WTC11 (cell line): ENCODE measurements at regions of chr7 and their contacts with region 1.

Region 1: GRCh38 chr7:2709553-2710285 is 21.7 kb downstream of the AMZ1 start:
- DNase-seq: peak; percentile 91
- ATAC-seq: peak; percentile 94
- H3K4me3 Mint-ChIP-seq: no peak overlapping the region
- H3K27ac Mint-ChIP-seq: no peak overlapping the region
- H3K4me1 Mint-ChIP-seq: peaks cover 8% of the 10 kb centered on the region
- H3K27me3 Mint-ChIP-seq: no peaks in the 10 kb centered on the region
- CTCF ChIP-seq: peak; percentile 93

Region 2: DNA sequence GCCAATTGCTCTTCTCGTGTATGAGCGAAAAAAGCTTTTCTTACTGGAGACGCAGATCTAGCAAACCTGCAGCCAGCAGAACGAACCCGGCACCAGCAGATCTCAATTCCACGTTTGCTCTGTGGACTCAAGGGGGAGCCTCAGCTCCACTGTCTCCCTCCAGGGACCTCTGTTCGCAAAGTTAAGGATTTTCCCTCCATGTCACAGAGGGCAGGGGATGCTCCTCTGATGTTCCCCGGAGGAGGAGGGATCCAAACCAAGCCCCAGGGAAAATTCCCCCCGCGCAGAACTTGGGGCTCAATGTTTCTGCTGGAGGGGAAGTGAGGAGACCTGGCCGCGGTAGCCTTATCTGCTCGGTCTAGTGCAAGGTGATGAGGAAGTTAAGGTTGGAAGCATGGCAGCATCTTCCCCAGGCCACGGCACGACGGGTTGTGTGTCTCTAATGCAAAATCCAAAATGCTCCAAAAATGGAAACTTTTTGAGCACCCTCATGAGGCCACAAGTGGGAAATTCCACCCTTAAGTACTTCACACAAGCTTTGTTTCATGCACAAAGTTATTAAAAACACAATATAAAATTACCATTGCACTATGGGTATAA is 141.9 kb before region 1 on chr7:
- CTCF ChIA-PET with region 1: interaction called, 26 read pairs
- POLR2A ChIA-PET with region 1: no interaction called
- DNase-seq: peak; percentile 54
- ATAC-seq: peak; percentile 87
- H3K4me3 Mint-ChIP-seq: no peak overlapping the region
- H3K27ac Mint-ChIP-seq: no peak overlapping the region
- H3K4me1 Mint-ChIP-seq: peaks cover 9% of the 10 kb centered on the region
- H3K27me3 Mint-ChIP-seq: no peaks in the 10 kb centered on the region
- CTCF ChIP-seq: no peak

Region 3: GRCh38 chr7:2621061-2621828 is 88.5 kb before region 1 on chr7:
- CTCF ChIA-PET with region 1: interaction called, 11 read pairs
- POLR2A ChIA-PET with region 1: no interaction called
- DNase-seq: peak; percentile 62
- ATAC-seq: peak; percentile 34
- H3K4me3 Mint-ChIP-seq: no peak overlapping the region
- H3K27ac Mint-ChIP-seq: peak overlapping the region; percentile 89; the same call in 1 of the 2 replicates
- H3K4me1 Mint-ChIP-seq: peaks cover 35% of the 10 kb centered on the region
- H3K27me3 Mint-ChIP-seq: no peaks in the 10 kb centered on the region; the same call in 1 of the 2 replicates
- CTCF ChIP-seq: no peak

Region 4: DNA sequence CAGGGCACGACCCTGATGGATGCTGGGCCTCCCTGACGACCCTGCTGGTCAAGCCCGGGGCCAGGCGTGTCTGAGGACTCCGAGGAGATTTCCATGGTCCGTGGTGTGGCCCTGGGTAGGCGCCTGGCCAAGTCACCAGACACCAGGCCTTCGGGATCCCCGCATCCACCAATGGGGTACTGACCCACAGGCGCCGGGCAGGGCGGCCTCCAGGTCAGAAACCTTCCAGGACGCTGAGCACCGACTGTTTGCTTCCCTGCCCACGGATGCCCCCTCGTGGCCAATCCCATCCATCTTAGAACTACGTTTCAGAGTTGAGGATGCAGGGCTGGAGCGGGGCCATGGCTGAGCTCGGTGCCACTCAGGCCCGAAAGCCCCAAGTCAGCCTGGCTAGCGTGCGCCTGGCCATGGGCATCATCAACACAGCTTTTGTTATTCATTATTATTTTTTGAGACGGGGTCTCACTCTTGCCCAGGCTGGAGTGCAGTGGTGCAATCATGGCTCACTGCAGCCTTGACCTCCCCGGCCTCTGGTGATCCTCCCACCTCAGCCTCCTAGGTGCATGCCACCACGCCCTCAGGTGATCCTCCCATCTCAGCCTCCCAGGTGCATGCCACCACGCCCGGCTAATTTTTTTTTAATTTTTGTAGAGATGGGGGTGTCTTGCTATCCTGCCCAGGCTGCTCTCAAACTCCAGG is 28.8 kb before region 1 on chr7:
- CTCF ChIA-PET with region 1: interaction called, 102 read pairs
- POLR2A ChIA-PET with region 1: no interaction called
- DNase-seq: peak; percentile 89
- ATAC-seq: peak; percentile 90
- H3K4me3 Mint-ChIP-seq: no peak overlapping the region
- H3K27ac Mint-ChIP-seq: no peak overlapping the region
- H3K4me1 Mint-ChIP-seq: no peaks in the 10 kb centered on the region
- H3K27me3 Mint-ChIP-seq: peaks cover 2% of the 10 kb centered on the region
- CTCF ChIP-seq: peak; percentile 69

Region 5: GRCh38 chr7:2720582-2721491 is 11.1 kb after region 1 on chr7:
- CTCF ChIA-PET with region 1: interaction called, 63 read pairs
- POLR2A ChIA-PET with region 1: interaction called, 8 read pairs
- DNase-seq: no peak
- ATAC-seq: peak; percentile 10; the same call in 1 of the 2 replicates
- H3K4me3 Mint-ChIP-seq: no peak overlapping the region
- H3K27ac Mint-ChIP-seq: peak overlapping the region; percentile 63
- H3K4me1 Mint-ChIP-seq: peaks cover 3% of the 10 kb centered on the region; the same call in 1 of the 2 replicates
- H3K27me3 Mint-ChIP-seq: no peaks in the 10 kb centered on the region
- CTCF ChIP-seq: no peak

Region 6: DNA sequence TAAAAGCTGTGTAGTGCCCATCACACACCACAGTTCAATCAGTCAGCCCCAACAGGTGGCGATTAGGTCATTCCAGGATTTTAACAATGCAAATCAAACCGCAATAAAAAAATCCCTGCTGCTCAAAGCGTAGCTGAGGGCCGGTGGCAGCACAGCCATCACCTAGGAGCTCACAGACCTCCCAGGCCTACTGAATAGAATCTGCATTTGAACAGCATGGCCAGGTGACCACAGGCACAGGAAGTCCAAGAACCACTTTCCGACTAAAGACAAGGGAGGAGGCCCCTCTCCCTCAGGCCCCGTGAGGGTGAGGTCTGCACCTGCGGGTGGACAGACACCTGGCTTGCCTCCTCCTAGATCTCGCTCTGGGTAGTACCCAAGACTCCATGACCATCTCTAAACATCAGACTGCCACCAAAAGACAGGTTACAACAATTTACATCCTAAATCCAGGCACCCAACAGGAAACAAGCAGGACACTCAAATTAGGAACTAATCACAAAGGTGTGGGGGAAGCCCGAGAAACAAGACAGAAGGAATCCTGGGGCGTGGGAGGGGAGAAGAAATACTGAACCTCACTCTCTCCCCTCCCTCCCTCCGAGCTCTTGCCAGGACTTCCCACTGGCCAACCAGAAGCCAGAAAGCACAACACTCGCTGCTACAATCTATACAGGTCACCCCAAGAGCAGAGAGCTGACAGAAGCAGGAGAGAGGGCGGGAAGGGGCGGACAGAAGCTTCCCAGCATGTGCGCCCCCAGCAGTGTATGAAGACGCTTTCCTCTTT is 115.2 kb after region 1 on chr7:
- CTCF ChIA-PET with region 1: interaction called, 12 read pairs
- POLR2A ChIA-PET with region 1: no interaction called
- DNase-seq: peak; percentile 66
- ATAC-seq: peak; percentile 79
- H3K4me3 Mint-ChIP-seq: peak overlapping the region; percentile 66
- H3K27ac Mint-ChIP-seq: peak overlapping the region; percentile 98
- H3K4me1 Mint-ChIP-seq: peaks cover 92% of the 10 kb centered on the region
- H3K27me3 Mint-ChIP-seq: no peaks in the 10 kb centered on the region
- CTCF ChIP-seq: no peak

Region 7: DNA sequence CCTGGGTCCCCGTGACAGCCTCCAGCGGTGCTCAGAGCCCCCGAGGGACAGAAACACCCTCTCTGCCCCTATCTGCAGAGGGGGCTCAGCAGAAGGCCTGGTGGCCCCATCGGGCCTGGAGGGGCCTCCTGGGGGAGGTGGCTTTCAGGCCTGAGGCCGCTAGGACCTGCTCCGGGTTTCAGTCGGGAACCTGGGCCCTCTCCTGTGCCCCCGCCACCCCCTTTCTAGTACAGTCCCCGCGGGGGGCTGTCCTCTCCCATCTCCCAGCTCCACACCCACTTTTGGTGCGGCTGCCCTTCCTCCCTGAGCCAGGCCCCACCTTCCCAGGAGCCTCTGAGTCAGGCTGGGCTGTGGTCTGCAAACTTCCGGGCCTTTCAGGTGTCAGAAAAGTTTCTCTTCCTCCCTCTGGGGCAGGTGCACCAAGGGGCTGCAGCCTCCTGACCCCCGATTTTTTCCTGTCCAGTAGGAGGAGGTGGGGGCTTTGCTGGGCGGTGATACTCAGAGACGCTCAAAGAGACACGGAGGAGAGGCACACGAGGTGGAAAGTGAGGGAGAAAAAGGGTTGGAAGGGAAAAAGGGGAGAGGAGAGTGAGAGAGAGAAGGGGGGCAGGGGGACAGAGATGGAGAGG is 333.3 kb after region 1 on chr7:
- CTCF ChIA-PET with region 1: no interaction called
- POLR2A ChIA-PET with region 1: no interaction called
- DNase-seq: peak; percentile 32
- ATAC-seq: peak; percentile 74
- H3K4me3 Mint-ChIP-seq: peak overlapping the region; percentile 77
- H3K27ac Mint-ChIP-seq: no peak overlapping the region
- H3K4me1 Mint-ChIP-seq: peaks cover 17% of the 10 kb centered on the region
- H3K27me3 Mint-ChIP-seq: no peaks in the 10 kb centered on the region
- CTCF ChIP-seq: no peak